Heart left ventricle (tissue), 16 donors: ENCODE measurements at regions of chr3 and their contacts with region 1.

Region 1: DNA sequence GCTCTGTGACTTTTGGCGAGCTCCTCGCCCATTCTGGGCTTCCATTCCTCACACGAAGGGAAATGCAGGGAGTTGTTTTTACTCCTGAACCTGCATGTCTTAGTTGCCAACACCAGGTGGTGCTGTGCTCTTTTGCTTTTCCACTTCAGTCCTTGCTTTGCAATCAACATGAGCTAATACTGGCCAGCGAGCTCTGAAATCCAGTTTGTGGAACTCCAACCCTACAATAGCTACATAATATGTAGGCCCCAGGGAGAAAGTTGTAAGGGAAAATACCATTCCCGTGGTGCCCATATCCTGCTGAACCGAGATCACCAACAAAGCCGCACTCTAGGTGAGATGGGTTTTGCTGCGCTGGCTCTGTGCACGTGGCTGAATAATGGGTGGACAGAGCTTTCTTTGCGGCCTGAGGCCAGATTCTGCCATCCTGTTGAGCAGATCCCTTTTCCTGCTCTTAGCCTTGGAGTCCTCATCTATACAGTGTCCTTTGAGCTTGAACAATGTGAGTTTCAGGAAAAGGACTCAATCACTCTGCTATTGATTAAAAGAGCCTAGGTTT is 25.0 kb downstream of the LSM3 start:
- DNase-seq: peak in 4 of 5 donors; percentile 58 to 72 (median 64)
- ATAC-seq: peak; percentile 62 to 78 (median 71)
- H3K4me3 ChIP-seq: no peak overlapping the region
- H3K27ac ChIP-seq: peak overlapping the region in 7 of 12 donors; percentile 9 to 88 (median 80)
- H3K4me1 ChIP-seq: peaks cover 0 to 39% (median 25%) of the 10 kb centered on the region in 12 donors
- H3K27me3 ChIP-seq: no peaks in the 10 kb centered on the region
- CTCF ChIP-seq: peak; percentile 74 to 90 (median 85)
- POLR2A ChIP-seq: no peak

Region 2: GRCh38 chr3:14234251-14235002 is 30.8 kb after region 1 on chr3:
- intact Hi-C with region 1: loop called in 2 of 10 experiments (anchors 1 to 2 kb)
- DNase-seq: peak in 4 of 5 donors; percentile 33 to 61 (median 53)
- ATAC-seq: peak; percentile 17 to 65 (median 57)
- H3K4me3 ChIP-seq: no peak overlapping the region
- H3K27ac ChIP-seq: peak overlapping the region in 10 of 12 donors; percentile 39 to 95 (median 80)
- H3K4me1 ChIP-seq: peaks cover 0 to 57% (median 29%) of the 10 kb centered on the region in 12 donors
- H3K27me3 ChIP-seq: peaks cover 0 to 5% (median 0%) of the 10 kb centered on the region in 9 donors
- CTCF ChIP-seq: no peak
- POLR2A ChIP-seq: no peak

Region 3: GRCh38 chr3:14467814-14468620 is 264.4 kb after region 1 on chr3:
- intact Hi-C with region 1: loop called (anchors 1 to 2 kb)
- DNase-seq: peak in 1 of 5 donors; percentile 30
- ATAC-seq: peak in 2 of 4 donors; percentile 48 to 53
- H3K4me3 ChIP-seq: no peak overlapping the region
- H3K27ac ChIP-seq: no peak overlapping the region
- H3K4me1 ChIP-seq: peaks cover 0 to 25% (median 0%) of the 10 kb centered on the region in 12 donors
- H3K27me3 ChIP-seq: peaks cover 0 to 5% (median 0%) of the 10 kb centered on the region in 9 donors
- CTCF ChIP-seq: peak; percentile 77 to 94 (median 89)
- POLR2A ChIP-seq: no peak

Region 4: DNA sequence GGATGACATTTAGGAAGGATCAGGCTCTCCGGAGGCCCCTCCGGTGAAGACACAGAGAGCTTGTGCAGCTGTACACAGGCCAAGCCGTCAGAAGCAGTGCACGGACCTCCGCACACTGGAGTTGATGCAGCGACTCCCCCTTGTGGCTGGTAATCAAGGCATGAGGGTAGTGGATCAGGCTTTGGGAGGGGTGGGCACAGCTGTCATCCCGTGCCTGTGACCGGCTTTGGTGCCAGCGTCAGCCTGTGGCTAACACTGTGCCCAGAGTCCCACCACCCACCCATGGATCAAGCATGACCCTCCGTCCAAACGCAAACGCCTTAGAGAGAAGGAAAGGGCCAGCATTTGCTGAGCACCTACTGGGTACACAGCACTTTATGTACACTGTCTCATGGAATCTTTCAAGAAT is 344.7 kb after region 1 on chr3:
- intact Hi-C with region 1: loop called in 3 of 10 experiments (anchors 2 to 5 kb)
- DNase-seq: peak; percentile 68 to 88 (median 80)
- ATAC-seq: peak; percentile 83 to 91 (median 88)
- H3K4me3 ChIP-seq: no peak overlapping the region
- H3K27ac ChIP-seq: peak overlapping the region in 3 of 12 donors; percentile 14 to 64 (median 59)
- H3K4me1 ChIP-seq: peaks cover 0 to 28% (median 10%) of the 10 kb centered on the region in 12 donors
- H3K27me3 ChIP-seq: no peaks in the 10 kb centered on the region
- CTCF ChIP-seq: peak; percentile 64 to 86 (median 77)
- POLR2A ChIP-seq: no peak

Region 5: DNA sequence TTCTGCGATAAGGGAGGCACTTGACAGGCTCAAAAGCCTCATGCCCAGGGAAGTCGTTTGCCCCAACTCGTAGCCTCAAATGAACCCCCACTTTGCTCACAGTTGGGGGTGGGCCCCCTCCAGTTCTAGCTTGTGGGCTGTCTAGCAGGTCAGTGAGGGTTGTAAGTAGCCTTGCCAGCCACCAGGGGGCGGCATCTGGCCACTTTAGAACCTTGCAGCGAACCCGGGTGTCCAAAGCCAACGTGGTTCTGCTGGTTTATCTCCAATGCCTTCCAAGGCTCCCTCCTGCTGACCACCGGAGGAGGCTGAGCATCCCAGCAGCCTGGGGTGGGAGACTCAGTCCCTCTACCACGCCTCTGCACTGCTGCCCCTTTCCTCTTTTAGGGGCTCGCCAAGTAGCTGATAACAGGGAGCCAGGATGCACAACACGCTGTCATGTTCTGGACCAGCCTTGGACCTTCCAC is 904.5 kb after region 1 on chr3:
- intact Hi-C with region 1: no loop called
- DNase-seq: peak; percentile 60 to 87 (median 68)
- ATAC-seq: peak; percentile 63 to 82 (median 78)
- H3K4me3 ChIP-seq: no peak overlapping the region
- H3K27ac ChIP-seq: no peak overlapping the region
- H3K4me1 ChIP-seq: peaks cover 0 to 11% (median 4%) of the 10 kb centered on the region in 12 donors
- H3K27me3 ChIP-seq: no peaks in the 10 kb centered on the region
- CTCF ChIP-seq: peak; percentile 78 to 93 (median 88)
- POLR2A ChIP-seq: no peak